ENCODE measurements at regions of chr15 and their contacts with region 1.

Region 1: GRCh38 chr15:101251830-101252820 is at the start of gene CHSY1:
- DNase-seq: peak; percentile 84 to 90
- ATAC-seq: peak; percentile 92 to 93
- H3K4me3 ChIP-seq: peak within 1 kb of the TSS; percentile 74 to 87 (median 82)
- H3K27ac ChIP-seq: peak within 1 kb of the TSS; percentile 74 to 88 (median 86)
- H3K4me1 ChIP-seq: peaks cover 30 to 36% of the 10 kb centered on the region in 2 donors
- H3K27me3 ChIP-seq: no peaks in the 10 kb centered on the region
- CTCF ChIP-seq: peak in 3 of 5 experiments; percentile 7 to 37 (median 33)
- POLR2A ChIP-seq: peak; percentile 90 to 93
- total RNA-seq, gene CHSY1: 4.6 to 8.3 (median 7.1) TPM

Region 2: DNA sequence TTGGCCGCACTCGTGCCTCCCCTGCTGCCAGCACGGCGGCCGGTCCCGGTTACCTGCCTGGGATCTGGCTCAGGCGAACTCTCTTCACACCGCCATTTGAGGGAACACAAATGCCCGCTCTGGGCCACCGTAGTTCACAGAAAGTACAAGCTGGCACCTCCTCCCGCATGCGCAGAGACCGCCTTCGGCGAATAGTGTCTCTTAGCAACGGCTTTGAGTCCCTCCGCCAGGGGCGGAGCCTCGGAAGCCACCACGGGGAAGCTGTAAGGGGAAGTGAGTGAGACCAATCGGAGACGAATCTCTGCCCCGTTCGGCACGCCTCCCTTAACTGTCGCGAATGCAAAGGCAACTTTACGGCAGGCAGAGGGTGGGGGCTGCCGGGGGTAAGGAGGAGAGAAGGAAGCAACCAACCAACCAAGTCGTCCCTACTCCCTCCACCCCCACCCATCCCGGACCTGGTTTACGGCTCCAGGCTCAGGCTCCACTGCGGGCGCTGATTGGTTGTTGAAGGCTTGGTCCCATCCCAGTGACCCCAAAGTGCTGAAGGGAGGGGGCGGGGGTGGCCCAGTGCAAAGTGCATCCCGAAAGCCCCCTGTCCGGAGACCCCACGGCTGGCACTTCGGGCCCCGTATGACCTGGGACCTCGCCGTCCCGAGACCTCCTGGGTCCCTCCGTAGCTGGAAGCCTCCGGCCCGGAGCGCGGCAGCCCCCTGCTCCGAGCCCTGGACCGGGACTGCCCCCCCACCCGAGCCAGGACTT is 649.9 kb before region 1 on chr15 and contains the starts of genes ASB7 and LINS1:
- in situ Hi-C with region 1: loop called in 2 of 4 experiments (anchors 25 kb)
- intact Hi-C with region 1: no loop called
- DNase-seq: peak; percentile 100
- ATAC-seq: peak; percentile 96 to 97
- H3K4me3 ChIP-seq: peak within 1 kb of the TSS; percentile 82 to 98 (median 96)
- H3K27ac ChIP-seq: peak within 1 kb of the TSS; percentile 85 to 94 (median 92)
- H3K4me1 ChIP-seq: peaks cover 32 to 44% of the 10 kb centered on the region in 2 donors
- H3K27me3 ChIP-seq: no peaks in the 10 kb centered on the region
- CTCF ChIP-seq: no peak
- POLR2A ChIP-seq: peak; percentile 35 to 49
- total RNA-seq, gene ASB7: 5.1 to 10.3 (median 6.3) TPM
- total RNA-seq, gene LINS1: 3.2 to 11.9 (median 10.3) TPM

Region 3: GRCh38 chr15:100627789-100628395 is 624.2 kb before region 1 on chr15:
- in situ Hi-C with region 1: loop called in 3 of 4 experiments (anchors 25 kb)
- intact Hi-C with region 1: no loop called
- DNase-seq: peak; percentile 35 to 50
- ATAC-seq: peak; percentile 83 to 91
- H3K4me3 ChIP-seq: no peak overlapping the region
- H3K27ac ChIP-seq: no peak overlapping the region
- H3K4me1 ChIP-seq: peaks cover 7 to 9% of the 10 kb centered on the region in 2 donors
- H3K27me3 ChIP-seq: no peaks in the 10 kb centered on the region
- CTCF ChIP-seq: peak; percentile 78 to 82 (median 81)
- POLR2A ChIP-seq: no peak

Region 4: GRCh38 chr15:100918034-100918689 is 334.0 kb before region 1 on chr15:
- in situ Hi-C with region 1: loop called in 2 of 4 experiments (anchors 25 kb)
- intact Hi-C with region 1: loop called (anchors 10 kb)
- DNase-seq: peak; percentile 38 to 62
- ATAC-seq: peak; percentile 63 to 72
- H3K4me3 ChIP-seq: peak overlapping the region; percentile 54 to 67 (median 63)
- H3K27ac ChIP-seq: peak overlapping the region in 2 of 4 donors; percentile 14 to 19
- H3K4me1 ChIP-seq: no peaks in the 10 kb centered on the region
- H3K27me3 ChIP-seq: peaks cover 3 to 14% (median 11%) of the 10 kb centered on the region in 3 donors
- CTCF ChIP-seq: peak; percentile 68 to 87 (median 80)
- POLR2A ChIP-seq: no peak

Region 5: GRCh38 chr15:101127506-101128076 is 124.5 kb before region 1 on chr15:
- in situ Hi-C with region 1: no loop called
- intact Hi-C with region 1: loop called (anchors 10 kb)
- DNase-seq: peak; percentile 46 to 70
- ATAC-seq: peak; percentile 91 to 92
- H3K4me3 ChIP-seq: no peak overlapping the region
- H3K27ac ChIP-seq: peak overlapping the region; percentile 59 to 67 (median 62)
- H3K4me1 ChIP-seq: peaks cover 0 to 6% of the 10 kb centered on the region in 2 donors
- H3K27me3 ChIP-seq: no peaks in the 10 kb centered on the region
- CTCF ChIP-seq: no peak
- POLR2A ChIP-seq: no peak

Region 6: GRCh38 chr15:101188637-101189408 is 63.3 kb before region 1 on chr15:
- in situ Hi-C with region 1: no loop called
- intact Hi-C with region 1: loop called (anchors 5 kb)
- DNase-seq: no peak
- ATAC-seq: no peak
- H3K4me3 ChIP-seq: peak overlapping the region; percentile 22 to 41 (median 36)
- H3K27ac ChIP-seq: peak overlapping the region; percentile 48 to 79 (median 74)
- H3K4me1 ChIP-seq: peaks cover 49 to 73% of the 10 kb centered on the region in 2 donors
- H3K27me3 ChIP-seq: no peaks in the 10 kb centered on the region
- CTCF ChIP-seq: no peak
- POLR2A ChIP-seq: no peak